GM12878 (cell line): ENCODE measurements at regions of chr3 and their contacts with region 1.

Region 1: DNA sequence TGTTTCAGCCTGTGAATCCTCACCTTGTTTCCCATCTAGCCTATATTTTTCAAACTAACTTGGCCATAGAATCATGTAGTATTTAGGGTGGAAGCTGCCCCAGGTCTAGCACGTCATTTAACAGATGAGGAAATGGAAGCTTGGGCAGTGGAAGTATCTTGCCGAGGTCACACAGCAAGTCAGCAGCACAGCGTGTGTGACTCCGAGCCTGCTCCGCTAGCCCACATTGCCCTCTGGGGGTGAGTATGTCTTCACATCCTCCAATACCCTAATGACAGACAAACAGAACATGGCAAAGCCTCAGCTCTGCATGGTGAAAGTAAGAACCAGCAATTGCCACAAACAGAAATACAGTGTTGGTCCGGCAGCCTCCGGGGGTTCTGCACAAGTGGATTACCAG is 2.2 kb upstream of the CCR5 start:
- DNase-seq: peak; percentile 70
- ATAC-seq: peak; percentile 89
- H3K4me3 ChIP-seq: no peak overlapping the region
- H3K27ac ChIP-seq: no peak overlapping the region
- H3K4me1 ChIP-seq: peaks cover 14% of the 10 kb centered on the region
- H3K27me3 ChIP-seq: no peaks in the 10 kb centered on the region
- CTCF ChIP-seq: peak; percentile 64 to 74 (median 72)
- EP300 ChIP-seq: no peak
- POLR2A ChIP-seq: no peak
- RAD21 ChIP-seq: peak; percentile 87

Region 2: DNA sequence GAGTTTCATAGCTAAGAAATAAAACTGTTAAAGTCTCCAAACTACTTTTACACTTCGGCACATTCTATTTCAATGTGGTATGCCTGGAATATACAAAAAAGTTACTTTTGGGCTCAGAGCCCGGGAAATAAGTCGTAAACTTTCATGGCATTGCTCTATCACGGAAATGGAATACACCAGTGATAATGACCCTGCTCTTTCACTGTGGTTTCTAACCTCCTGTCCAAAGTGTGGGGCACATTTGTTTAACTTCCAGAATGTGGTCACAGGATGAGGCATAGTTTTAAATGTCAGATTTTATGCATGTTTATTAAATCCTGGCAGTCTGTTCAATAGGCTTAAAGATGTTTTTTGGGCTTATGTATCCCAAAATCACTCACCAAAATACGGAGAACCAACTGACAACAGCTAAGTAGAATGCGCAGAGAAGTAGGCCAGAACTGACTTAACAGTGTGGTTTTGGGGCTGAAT is 420.2 kb before region 1 on chr3:
- CTCF ChIA-PET with region 1: no interaction called
- POLR2A ChIA-PET with region 1: no interaction called
- RAD21 ChIA-PET with region 1: interaction called, 3 read pairs
- SMC1A ChIA-PET with region 1: no interaction called
- in situ Hi-C with region 1: loop called (anchors 5 kb)
- intact Hi-C with region 1: no loop called
- DNase-seq: no peak
- ATAC-seq: no peak
- H3K4me3 ChIP-seq: no peak overlapping the region
- H3K27ac ChIP-seq: no peak overlapping the region
- H3K4me1 ChIP-seq: no peaks in the 10 kb centered on the region
- H3K27me3 ChIP-seq: no peaks in the 10 kb centered on the region
- CTCF ChIP-seq: no peak
- EP300 ChIP-seq: no peak
- POLR2A ChIP-seq: no peak
- RAD21 ChIP-seq: no peak

Region 3: GRCh38 chr3:46193436-46193835 is 175.1 kb before region 1 on chr3:
- CTCF ChIA-PET with region 1: interaction called, 4 read pairs
- POLR2A ChIA-PET with region 1: no interaction called
- RAD21 ChIA-PET with region 1: interaction called, 3 read pairs
- SMC1A ChIA-PET with region 1: interaction called, 17 read pairs
- in situ Hi-C with region 1: no loop called
- intact Hi-C with region 1: no loop called
- DNase-seq: no peak
- ATAC-seq: no peak
- H3K4me3 ChIP-seq: no peak overlapping the region
- H3K27ac ChIP-seq: no peak overlapping the region
- H3K4me1 ChIP-seq: peaks cover 10% of the 10 kb centered on the region
- H3K27me3 ChIP-seq: no peaks in the 10 kb centered on the region; a peak in 1 of 4 replicates
- CTCF ChIP-seq: no peak
- EP300 ChIP-seq: no peak
- POLR2A ChIP-seq: no peak
- RAD21 ChIP-seq: no peak

Region 4: DNA sequence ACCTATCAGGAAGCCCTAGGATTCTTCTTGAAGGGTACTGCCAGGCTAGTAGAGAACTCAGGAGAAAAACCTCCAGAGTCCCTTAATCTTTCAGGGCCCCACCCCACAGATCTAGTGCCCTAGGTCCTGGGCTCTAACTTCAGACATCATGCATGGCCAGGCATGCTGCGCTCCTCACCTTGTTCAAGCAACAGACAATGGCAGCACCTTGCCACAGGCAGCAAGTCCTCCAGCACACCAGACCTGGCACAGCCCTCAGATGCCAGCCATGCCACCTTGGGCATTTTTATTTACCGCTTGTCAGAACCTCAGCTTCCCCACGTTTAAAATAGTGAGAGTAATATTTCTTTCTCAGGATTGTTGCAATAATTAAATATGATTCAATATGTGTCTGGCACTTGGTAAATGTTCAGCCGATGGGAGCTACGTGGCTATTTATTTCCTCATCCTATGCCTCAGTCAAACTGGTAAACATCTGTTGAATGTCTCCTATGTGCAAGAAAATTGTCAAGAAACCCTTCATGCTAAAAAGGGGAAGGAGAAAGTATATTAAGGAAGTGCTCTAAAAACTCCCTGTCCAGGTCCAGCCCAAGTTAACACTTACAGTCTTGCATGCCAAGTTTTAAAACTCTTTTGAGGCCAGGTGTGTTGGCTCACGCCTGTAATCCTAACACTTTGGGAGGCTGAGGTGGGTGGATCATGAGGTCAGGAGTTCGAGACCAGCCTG is 146.0 kb before region 1 on chr3:
- CTCF ChIA-PET with region 1: interaction called, 555 read pairs
- POLR2A ChIA-PET with region 1: interaction called, 3 read pairs
- RAD21 ChIA-PET with region 1: interaction called, 421 read pairs
- SMC1A ChIA-PET with region 1: interaction called, 434 read pairs
- in situ Hi-C with region 1: no loop called
- intact Hi-C with region 1: no loop called
- DNase-seq: no peak
- ATAC-seq: peak; percentile 47
- H3K4me3 ChIP-seq: no peak overlapping the region
- H3K27ac ChIP-seq: no peak overlapping the region
- H3K4me1 ChIP-seq: peaks cover 29% of the 10 kb centered on the region
- H3K27me3 ChIP-seq: no peaks in the 10 kb centered on the region; a peak in 1 of 4 replicates
- CTCF ChIP-seq: no peak
- EP300 ChIP-seq: no peak
- POLR2A ChIP-seq: no peak
- RAD21 ChIP-seq: no peak

Region 5: GRCh38 chr3:46266598-46266997 is 102.0 kb before region 1 on chr3:
- CTCF ChIA-PET with region 1: interaction called, 9 read pairs
- POLR2A ChIA-PET with region 1: no interaction called
- RAD21 ChIA-PET with region 1: interaction called, 10 read pairs
- SMC1A ChIA-PET with region 1: interaction called, 137 read pairs
- in situ Hi-C with region 1: no loop called
- intact Hi-C with region 1: no loop called
- DNase-seq: no peak
- ATAC-seq: no peak
- H3K4me3 ChIP-seq: no peak overlapping the region
- H3K27ac ChIP-seq: no peak overlapping the region
- H3K4me1 ChIP-seq: peaks cover 7% of the 10 kb centered on the region
- H3K27me3 ChIP-seq: 0 out of 4 replicates have a peak, but pooled peaks cover 0 to 6% of the 10 kb centered on the region in 2 experiments
- CTCF ChIP-seq: no peak
- EP300 ChIP-seq: no peak
- POLR2A ChIP-seq: no peak
- RAD21 ChIP-seq: no peak

Region 6: DNA sequence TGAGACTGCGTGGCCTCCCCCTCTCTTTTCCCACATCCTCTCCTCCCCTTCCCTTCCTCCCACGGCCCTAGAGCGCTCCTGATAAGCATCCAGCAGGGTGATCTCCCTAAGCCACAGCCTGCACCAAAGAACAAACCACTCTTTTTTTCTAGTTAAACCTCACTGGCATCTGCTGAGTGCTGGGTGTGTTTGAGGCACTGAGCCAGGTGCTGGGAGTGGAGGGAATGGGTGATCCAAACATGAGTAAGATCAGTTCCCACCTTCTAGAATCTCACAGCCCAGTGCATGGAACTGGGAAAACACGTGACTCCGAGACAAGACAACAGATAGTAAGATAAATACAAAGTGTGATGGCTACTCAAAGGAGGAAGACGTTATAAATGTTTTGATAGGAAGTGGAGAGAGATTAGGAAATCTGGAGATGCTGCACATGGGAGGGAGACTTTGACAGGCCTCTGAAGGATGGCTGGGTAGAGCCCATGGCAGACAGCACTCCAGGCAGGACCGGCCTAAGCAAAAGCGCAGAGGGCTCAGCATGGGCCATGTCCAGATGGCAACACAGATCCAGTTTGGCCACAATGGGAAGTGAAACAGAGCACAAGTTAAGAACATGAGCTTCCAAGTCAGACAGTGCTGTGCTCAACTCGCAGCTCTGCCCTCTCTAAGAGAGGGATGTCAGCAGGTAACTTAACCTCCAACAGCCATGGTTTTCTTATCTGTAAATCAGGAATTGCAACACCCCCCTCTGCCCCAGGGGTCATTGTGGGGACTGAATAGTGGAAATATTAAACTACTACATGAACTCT is 70.7 kb before region 1 on chr3:
- CTCF ChIA-PET with region 1: interaction called, 75 read pairs
- POLR2A ChIA-PET with region 1: interaction called, 8 read pairs
- RAD21 ChIA-PET with region 1: interaction called, 65 read pairs
- SMC1A ChIA-PET with region 1: interaction called, 91 read pairs
- in situ Hi-C with region 1: no loop called
- intact Hi-C with region 1: no loop called
- DNase-seq: no peak
- ATAC-seq: peak; percentile 20
- H3K4me3 ChIP-seq: no peak overlapping the region
- H3K27ac ChIP-seq: peak overlapping the region; percentile 47; the same call in 1 of the 2 replicates
- H3K4me1 ChIP-seq: peaks cover 68% of the 10 kb centered on the region
- H3K27me3 ChIP-seq: no peaks in the 10 kb centered on the region
- CTCF ChIP-seq: no peak
- EP300 ChIP-seq: no peak
- POLR2A ChIP-seq: no peak
- RAD21 ChIP-seq: no peak

Region 7: DNA sequence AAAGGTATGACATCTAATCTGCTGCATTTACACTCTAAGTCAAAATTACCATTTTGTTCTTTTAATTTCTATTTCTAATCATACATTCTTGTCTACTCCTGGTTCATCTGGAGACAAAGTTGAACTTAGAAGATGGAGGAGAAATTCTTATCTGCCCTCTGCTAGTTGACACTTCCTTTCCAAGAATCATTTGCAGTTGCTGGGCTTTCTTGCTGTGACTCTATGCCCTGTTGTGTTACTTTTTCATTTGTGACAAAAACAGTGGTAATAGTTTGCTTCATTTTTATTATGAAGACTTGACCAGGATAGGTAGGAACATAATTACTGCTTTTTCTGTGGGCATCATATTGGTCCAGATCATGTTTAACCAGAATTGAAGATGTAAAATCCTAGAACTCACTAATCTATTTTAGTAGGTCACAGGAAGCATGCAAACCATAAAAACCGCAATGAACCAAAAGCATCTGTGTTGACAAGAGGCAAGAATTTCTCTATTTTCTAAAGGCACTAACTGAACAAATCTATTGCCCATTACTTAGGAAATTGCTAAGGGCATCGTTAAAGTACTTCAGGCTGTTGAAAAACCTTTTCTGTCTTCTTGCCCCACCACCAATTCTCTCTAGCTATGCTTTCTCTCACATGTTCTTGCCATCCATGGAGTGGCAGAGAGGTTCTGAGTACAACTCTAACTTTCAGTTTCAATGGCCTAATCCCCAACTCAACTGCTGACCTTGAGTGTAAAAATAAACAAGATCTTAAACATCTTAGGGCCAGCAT is 18.9 kb before region 1 on chr3:
- CTCF ChIA-PET with region 1: interaction called, 7 read pairs
- POLR2A ChIA-PET with region 1: interaction called, 4 read pairs
- RAD21 ChIA-PET with region 1: interaction called, 26 read pairs
- SMC1A ChIA-PET with region 1: interaction called, 31 read pairs
- in situ Hi-C with region 1: no loop called
- intact Hi-C with region 1: no loop called
- DNase-seq: no peak
- ATAC-seq: peak; percentile 92
- H3K4me3 ChIP-seq: peak overlapping the region; percentile 42
- H3K27ac ChIP-seq: peak overlapping the region; percentile 59
- H3K4me1 ChIP-seq: peaks cover 31% of the 10 kb centered on the region
- H3K27me3 ChIP-seq: no peaks in the 10 kb centered on the region; a peak in 1 of 4 replicates
- CTCF ChIP-seq: no peak
- EP300 ChIP-seq: no peak
- POLR2A ChIP-seq: no peak
- RAD21 ChIP-seq: no peak

Region 8: GRCh38 chr3:47404955-47405790 is 1036.6 kb after region 1 on chr3:
- CTCF ChIA-PET with region 1: no interaction called
- POLR2A ChIA-PET with region 1: no interaction called
- RAD21 ChIA-PET with region 1: no interaction called
- SMC1A ChIA-PET with region 1: no interaction called
- in situ Hi-C with region 1: no loop called
- intact Hi-C with region 1: no loop called
- DNase-seq: no peak
- ATAC-seq: no peak
- H3K4me3 ChIP-seq: no peak overlapping the region
- H3K27ac ChIP-seq: no peak overlapping the region
- H3K4me1 ChIP-seq: no peaks in the 10 kb centered on the region
- H3K27me3 ChIP-seq: no peaks in the 10 kb centered on the region
- CTCF ChIP-seq: no peak
- EP300 ChIP-seq: no peak
- POLR2A ChIP-seq: no peak
- RAD21 ChIP-seq: no peak